Motor neuron (in vitro differentiated cells): ENCODE measurements at regions of chr4 and their contacts with region 1.

Region 1: DNA sequence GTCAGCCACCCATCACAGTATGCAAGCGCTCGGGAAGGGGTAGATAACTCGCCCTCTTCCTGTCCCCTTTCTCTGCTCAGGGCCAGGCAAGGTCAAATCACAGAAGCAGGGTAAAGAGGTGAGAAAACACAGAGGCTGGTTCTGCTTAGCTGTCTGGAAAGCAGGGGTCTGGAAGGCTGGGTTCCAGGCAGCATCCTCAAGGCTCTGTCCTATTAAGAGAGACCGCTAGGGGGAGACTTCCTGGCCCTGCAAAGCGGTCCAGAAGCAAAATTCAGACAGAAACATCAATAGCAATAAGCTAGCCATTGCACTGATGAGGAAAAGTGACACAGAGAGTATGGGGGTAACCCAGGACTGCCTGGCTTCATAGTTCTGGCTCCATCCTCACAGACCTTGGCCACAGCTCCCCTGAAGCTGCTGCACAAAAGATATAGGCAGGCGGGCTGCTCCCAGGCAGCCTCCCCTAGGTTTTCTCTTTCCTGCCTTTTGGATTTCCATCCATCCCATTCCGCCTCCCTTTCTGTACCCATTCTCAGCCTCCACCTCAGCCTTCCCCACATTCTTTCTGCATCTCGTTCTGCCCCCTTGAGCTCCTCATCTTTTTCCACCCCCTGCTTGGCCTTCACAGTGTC is 308.5 kb downstream of the EVC2 start:
- ATAC-seq: peak in 5 of 8 experiments; percentile 31 to 72 (median 53)
- H3K4me3 ChIP-seq: no peak overlapping the region
- H3K27ac ChIP-seq: no peak overlapping the region
- H3K4me1 ChIP-seq: no peaks in the 10 kb centered on the region

Region 2: GRCh38 chr4:5050520-5051277 is 349.2 kb before region 1 on chr4:
- in situ Hi-C with region 1: loop called in 1 of 9 experiments (anchors 25 kb)
- ATAC-seq: peak; percentile 38 to 76 (median 72)
- H3K4me3 ChIP-seq: peak overlapping the region; percentile 30 to 48 (median 41)
- H3K27ac ChIP-seq: no peak overlapping the region
- H3K4me1 ChIP-seq: peaks cover 0 to 2% of the 10 kb centered on the region in 2 donors

Region 3: GRCh38 chr4:5098176-5098575 is 301.7 kb before region 1 on chr4:
- in situ Hi-C with region 1: no loop called
- ATAC-seq: peak in 4 of 8 experiments; percentile 21 to 93 (median 51)
- H3K4me3 ChIP-seq: no peak overlapping the region
- H3K27ac ChIP-seq: no peak overlapping the region
- H3K4me1 ChIP-seq: no peaks in the 10 kb centered on the region

Region 4: GRCh38 chr4:5611750-5612149 is 211.8 kb after region 1 on chr4:
- in situ Hi-C with region 1: loop called in 1 of 9 experiments (anchors 25 kb)
- ATAC-seq: no peak
- H3K4me3 ChIP-seq: no peak overlapping the region
- H3K27ac ChIP-seq: no peak overlapping the region
- H3K4me1 ChIP-seq: peaks cover 12 to 15% of the 10 kb centered on the region in 2 donors

Region 5: GRCh38 chr4:5808081-5808741 is 408.3 kb after region 1 on chr4:
- in situ Hi-C with region 1: no loop called
- ATAC-seq: peak in 1 of 8 experiments; percentile 15
- H3K4me3 ChIP-seq: no peak overlapping the region
- H3K27ac ChIP-seq: no peak overlapping the region
- H3K4me1 ChIP-seq: no peaks in the 10 kb centered on the region